ENCODE measurements at regions of chr4 and their contacts with region 1.

Region 1: DNA sequence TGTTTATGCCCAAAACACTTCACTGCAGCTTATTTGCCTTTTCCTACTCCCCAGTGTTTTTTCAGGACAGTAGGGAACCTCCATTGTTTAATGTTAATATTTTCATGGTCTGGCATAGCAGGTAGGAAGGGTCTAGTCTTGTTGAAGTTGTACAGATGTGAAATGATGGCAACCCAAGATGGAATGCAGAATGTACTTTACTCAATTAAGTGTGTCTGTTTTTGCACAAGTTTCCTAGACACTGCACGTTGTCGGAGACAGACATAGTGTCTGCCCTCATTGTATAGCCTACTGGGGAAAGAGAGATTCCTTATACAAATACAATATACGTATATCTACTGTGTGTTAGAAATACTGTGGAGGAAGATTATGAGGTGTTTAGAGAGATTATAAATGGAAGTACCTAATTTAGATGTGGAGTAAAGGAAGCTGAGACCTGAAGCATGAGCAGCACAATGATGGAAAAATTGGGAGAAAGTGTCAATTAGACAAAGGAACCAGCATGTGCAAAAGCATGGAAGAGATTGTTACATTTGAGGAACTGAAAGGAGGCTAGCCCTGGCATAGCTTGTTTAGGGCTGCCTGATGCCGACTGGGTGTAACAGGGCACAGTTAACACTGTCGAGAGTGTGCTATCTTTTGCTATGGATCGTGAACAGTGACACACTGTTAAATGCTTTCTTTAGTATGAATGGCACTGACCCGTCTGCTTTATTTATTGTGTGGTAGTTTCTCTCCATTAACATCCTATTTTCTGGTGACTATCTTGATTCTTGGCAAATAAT is 18.4 kb downstream of the CPEB2 start:
- DNase-seq: no peak
- CTCF ChIP-seq: no peak

Region 2: GRCh38 chr4:14906805-14907204 is 113.9 kb before region 1 on chr4:
- CTCF ChIA-PET with region 1: no interaction called
- POLR2A ChIA-PET with region 1: no interaction called
- DNase-seq: no peak
- CTCF ChIP-seq: no peak

Region 3: GRCh38 chr4:15010038-15010585 is 10.6 kb before region 1 on chr4:
- CTCF ChIA-PET with region 1: interaction called, 16 read pairs
- POLR2A ChIA-PET with region 1: no interaction called
- DNase-seq: no peak
- CTCF ChIP-seq: no peak

Region 4: GRCh38 chr4:15457406-15458201 is 436.9 kb after region 1 on chr4:
- CTCF ChIA-PET with region 1: no interaction called
- POLR2A ChIA-PET with region 1: no interaction called
- DNase-seq: peak; percentile 28
- CTCF ChIP-seq: peak; percentile 63